Activated CD4-positive, alpha-beta memory T cell treated with anti-CD3 and anti-CD28 coated beads, Interleukin-2, amount 10 ng/mL, durations not matched to agents 7 days and 5 days (primary cell): ENCODE measurements at regions of chr4 and their contacts with region 1.

Region 1: DNA sequence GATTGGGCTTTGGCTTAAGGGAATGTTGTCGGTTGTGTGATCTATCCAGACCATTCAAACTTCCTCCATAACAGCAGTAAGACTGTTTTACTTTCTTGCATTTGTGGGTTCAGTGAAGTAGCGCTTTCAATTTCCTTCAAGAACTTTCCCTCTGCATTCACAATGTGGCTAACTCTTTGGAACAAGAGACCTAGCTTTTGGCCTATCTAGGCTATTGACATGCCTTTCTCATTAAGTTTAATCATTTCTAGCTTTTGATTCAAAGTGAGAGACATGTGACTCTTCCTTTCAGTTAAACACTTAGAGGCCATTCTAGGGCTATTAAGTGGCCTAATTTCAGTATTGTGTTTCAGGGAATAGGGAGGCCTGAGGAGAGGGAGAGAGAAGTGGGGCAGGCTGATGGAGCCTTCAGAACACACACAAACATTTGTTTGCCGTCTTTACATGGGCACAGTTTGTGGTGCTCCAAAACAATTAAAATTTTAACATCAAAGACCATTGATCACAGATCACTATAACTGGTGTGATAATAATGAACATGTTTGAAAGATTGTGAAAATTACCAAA is 34.1 kb downstream of the ADH5 start:
- DNase-seq: no peak
- H3K4me3 Mint-ChIP-seq: no peak overlapping the region
- H3K27ac Mint-ChIP-seq: peak overlapping the region; percentile 62
- H3K4me1 Mint-ChIP-seq: peaks cover 43% of the 10 kb centered on the region
- H3K27me3 Mint-ChIP-seq: no peaks in the 10 kb centered on the region

Region 2: DNA sequence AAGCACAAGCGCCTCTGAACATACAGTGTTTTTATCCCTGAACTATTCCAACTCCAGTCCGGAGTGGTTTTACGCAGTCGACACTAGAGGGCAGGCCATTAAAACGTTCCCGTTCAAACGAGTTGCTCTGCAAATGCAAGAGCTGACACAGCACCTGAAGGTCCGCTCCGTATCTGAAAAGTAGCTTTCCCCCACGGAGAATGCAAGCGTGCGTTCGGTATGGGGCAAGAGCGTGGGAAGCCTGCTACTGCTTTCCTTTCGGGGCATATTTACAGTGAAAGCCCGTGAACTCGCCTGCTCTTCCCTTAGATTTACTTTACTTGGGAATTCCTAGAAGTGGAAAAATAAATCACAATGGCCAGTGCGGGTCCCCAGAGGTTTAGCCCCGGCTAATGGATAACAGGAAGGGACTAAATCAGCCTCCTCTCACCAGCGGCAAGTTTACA is 586.9 kb before region 1 on chr4:
- CTCF ChIA-PET with region 1: interaction called, 14 read pairs
- POLR2A ChIA-PET with region 1: interaction called, 5 read pairs
- DNase-seq: peak; percentile 74
- H3K4me3 Mint-ChIP-seq: peak overlapping the region; percentile 49
- H3K27ac Mint-ChIP-seq: no peak overlapping the region
- H3K4me1 Mint-ChIP-seq: peaks cover 28% of the 10 kb centered on the region
- H3K27me3 Mint-ChIP-seq: no peaks in the 10 kb centered on the region

Region 3: GRCh38 chr4:99002279-99002678 is 52.2 kb before region 1 on chr4:
- CTCF ChIA-PET with region 1: interaction called, 181 read pairs
- POLR2A ChIA-PET with region 1: interaction called, 31 read pairs
- DNase-seq: no peak
- H3K4me3 Mint-ChIP-seq: no peak overlapping the region
- H3K27ac Mint-ChIP-seq: no peak overlapping the region
- H3K4me1 Mint-ChIP-seq: peaks cover 21% of the 10 kb centered on the region
- H3K27me3 Mint-ChIP-seq: no peaks in the 10 kb centered on the region

Region 4: GRCh38 chr4:99043346-99043745 is 11.2 kb before region 1 on chr4:
- CTCF ChIA-PET with region 1: interaction called, 14 read pairs
- POLR2A ChIA-PET with region 1: interaction called, 7 read pairs
- DNase-seq: no peak
- H3K4me3 Mint-ChIP-seq: no peak overlapping the region
- H3K27ac Mint-ChIP-seq: peak overlapping the region; percentile 74
- H3K4me1 Mint-ChIP-seq: peaks cover 20% of the 10 kb centered on the region
- H3K27me3 Mint-ChIP-seq: no peaks in the 10 kb centered on the region

Region 5: GRCh38 chr4:99074816-99075215 is 20.3 kb after region 1 on chr4:
- CTCF ChIA-PET with region 1: interaction called, 14 read pairs
- POLR2A ChIA-PET with region 1: interaction called, 5 read pairs
- DNase-seq: no peak
- H3K4me3 Mint-ChIP-seq: no peak overlapping the region
- H3K27ac Mint-ChIP-seq: no peak overlapping the region
- H3K4me1 Mint-ChIP-seq: peaks cover 2% of the 10 kb centered on the region
- H3K27me3 Mint-ChIP-seq: no peaks in the 10 kb centered on the region

Region 6: GRCh38 chr4:99088481-99089365 is 34.2 kb after region 1 on chr4 and contains the start of gene ADH5:
- CTCF ChIA-PET with region 1: interaction called, 11 read pairs
- POLR2A ChIA-PET with region 1: interaction called, 17 read pairs
- DNase-seq: peak; percentile 92
- H3K4me3 Mint-ChIP-seq: peak within 1 kb of the TSS; percentile 93
- H3K27ac Mint-ChIP-seq: peak within 1 kb of the TSS; percentile 97
- H3K4me1 Mint-ChIP-seq: peaks cover 45% of the 10 kb centered on the region
- H3K27me3 Mint-ChIP-seq: no peaks in the 10 kb centered on the region
- total RNA-seq, gene ADH5: 107 to 114 TPM